Activated naive CD8-positive, alpha-beta T cell treated with anti-CD3 and anti-CD28 coated beads, Interleukin-2, amount 10 ng/mL, durations not matched to agents 7 days and 5 days (primary cell): ENCODE measurements at regions of chr12 and their contacts with region 1.

Region 1: GRCh38 chr12:48957141-48958048 is at the start of gene ARF3:
- DNase-seq: peak; percentile 94
- ATAC-seq: peak; percentile 94
- H3K4me3 Mint-ChIP-seq: peak within 1 kb of the TSS; percentile 98
- H3K27ac Mint-ChIP-seq: peak within 1 kb of the TSS; percentile 93
- H3K4me1 Mint-ChIP-seq: peaks cover 31% of the 10 kb centered on the region
- H3K27me3 Mint-ChIP-seq: peaks cover 8% of the 10 kb centered on the region
- total RNA-seq, gene ARF3: 88.0 to 96.5 TPM

Region 2: DNA sequence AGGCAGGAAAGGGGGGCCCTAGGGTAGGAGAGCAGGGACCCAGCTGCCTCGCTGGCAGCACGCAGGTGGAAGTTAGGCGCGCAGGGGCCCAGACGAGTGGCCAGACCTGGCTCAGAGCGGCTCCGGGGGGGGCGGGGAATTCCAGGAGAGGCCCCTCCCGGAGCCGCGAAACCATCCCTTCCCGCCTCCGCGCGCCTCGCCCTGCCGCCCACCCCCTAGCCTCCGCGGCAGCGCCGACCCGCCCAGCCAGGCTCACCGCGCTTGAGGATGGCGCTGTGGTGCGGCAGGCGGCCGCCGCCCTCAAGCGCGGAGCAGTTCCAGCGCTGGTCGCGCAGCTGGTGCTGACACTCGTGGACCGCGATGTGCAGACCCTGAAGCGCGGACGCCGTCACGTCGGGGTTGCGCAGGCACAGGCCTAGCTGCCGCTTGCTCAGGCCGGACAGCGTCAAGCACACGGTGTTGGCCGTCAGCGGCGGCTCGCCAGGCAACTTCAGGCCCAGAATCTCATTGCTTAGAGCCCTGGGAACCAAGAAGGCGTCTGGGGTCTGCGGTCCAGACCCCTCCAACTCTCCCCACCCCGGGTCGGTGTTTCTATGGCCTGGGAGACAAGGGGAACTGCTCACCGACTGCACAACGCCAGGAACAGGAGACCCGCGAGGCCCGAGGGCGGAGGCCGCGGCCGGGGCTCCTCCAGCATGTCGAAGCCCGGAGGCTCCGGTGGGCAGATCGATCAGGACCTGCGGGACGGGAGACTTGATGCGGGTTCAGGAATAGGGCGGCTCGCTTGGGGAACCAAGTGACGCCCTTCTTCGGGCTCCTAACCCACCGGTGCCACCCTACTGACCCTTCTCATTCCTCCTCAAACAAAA is 12.7 kb after region 1 on chr12:
- POLR2A ChIA-PET with region 1: interaction called, 13 read pairs
- DNase-seq: peak; percentile 59
- ATAC-seq: peak; percentile 40
- H3K4me3 Mint-ChIP-seq: peak overlapping the region; percentile 5
- H3K27ac Mint-ChIP-seq: no peak overlapping the region
- H3K4me1 Mint-ChIP-seq: peaks cover 16% of the 10 kb centered on the region
- H3K27me3 Mint-ChIP-seq: peaks cover 66% of the 10 kb centered on the region